CD8-positive, alpha-beta T cell (primary cell): ENCODE measurements at regions of chr17 and their contacts with region 1.

Region 1: DNA sequence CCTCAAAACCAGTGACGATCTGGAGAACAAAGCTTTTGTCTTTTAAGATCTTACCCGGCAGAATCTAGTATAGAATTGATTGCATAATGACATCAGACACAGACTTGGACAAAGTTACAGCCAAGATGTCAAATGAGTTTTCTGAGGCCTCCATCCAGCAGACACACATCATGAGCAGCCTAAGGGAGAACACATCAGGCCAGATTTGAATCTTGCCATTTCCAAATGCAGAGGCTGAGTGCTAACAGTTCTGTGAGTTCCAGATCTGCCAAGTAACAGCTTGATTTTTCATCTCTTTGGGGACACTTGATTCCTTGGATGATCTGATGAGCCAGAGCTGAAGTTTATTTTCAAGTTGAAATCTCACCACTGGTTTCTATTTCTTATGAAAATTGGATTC is 21.0 kb downstream of the NOG start:
- DNase-seq: no peak
- ATAC-seq: no peak
- H3K4me3 ChIP-seq: no peak overlapping the region
- H3K4me3 Mint-ChIP-seq: no peak overlapping the region
- H3K27ac ChIP-seq: no peak overlapping the region
- H3K27ac Mint-ChIP-seq: no peak overlapping the region
- H3K4me1 ChIP-seq: no peaks in the 10 kb centered on the region
- H3K4me1 Mint-ChIP-seq: peaks cover 10% of the 10 kb centered on the region
- H3K27me3 ChIP-seq: no peaks in the 10 kb centered on the region
- H3K27me3 Mint-ChIP-seq: peaks cover 2% of the 10 kb centered on the region
- CTCF ChIP-seq: no peak

Region 2: DNA sequence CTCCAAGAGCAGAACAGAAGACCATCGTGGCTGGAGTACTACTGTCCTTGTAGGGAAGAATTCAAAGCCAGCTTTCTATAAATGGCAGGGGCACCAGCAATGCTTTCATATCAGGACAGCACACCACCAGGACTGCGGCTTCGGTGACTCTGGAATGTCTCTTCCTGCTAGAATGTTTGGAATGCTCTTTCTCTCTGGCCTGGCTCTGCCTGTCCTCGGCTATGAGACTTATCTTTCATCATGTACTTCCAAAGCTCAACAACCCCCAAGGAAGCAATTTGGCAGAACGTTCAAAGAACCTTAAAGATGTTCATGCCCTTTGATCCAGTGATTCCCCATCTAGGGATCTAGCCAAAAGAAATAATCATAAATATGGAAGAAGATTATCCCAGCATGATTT is 73.7 kb before region 1 on chr17:
- CTCF ChIA-PET with region 1: no interaction called
- POLR2A ChIA-PET with region 1: no interaction called
- intact Hi-C with region 1: no loop called
- DNase-seq: no peak
- ATAC-seq: no peak
- H3K4me3 ChIP-seq: no peak overlapping the region
- H3K4me3 Mint-ChIP-seq: no peak overlapping the region
- H3K27ac ChIP-seq: no peak overlapping the region
- H3K27ac Mint-ChIP-seq: no peak overlapping the region
- H3K4me1 ChIP-seq: no peaks in the 10 kb centered on the region
- H3K4me1 Mint-ChIP-seq: no peaks in the 10 kb centered on the region
- H3K27me3 ChIP-seq: peaks cover 0 to 2% of the 10 kb centered on the region in 2 experiments
- H3K27me3 Mint-ChIP-seq: peaks cover 18% of the 10 kb centered on the region
- CTCF ChIP-seq: no peak

Region 3: GRCh38 chr17:56602292-56603130 is 12.0 kb before region 1 on chr17:
- CTCF ChIA-PET with region 1: interaction called, 10 read pairs
- POLR2A ChIA-PET with region 1: no interaction called
- intact Hi-C with region 1: no loop called
- DNase-seq: peak in 6 of 9 experiments; percentile 43 to 84 (median 64)
- ATAC-seq: peak; percentile 81
- H3K4me3 ChIP-seq: peak overlapping the region in 1 of 2 experiments; percentile 10
- H3K4me3 Mint-ChIP-seq: peak overlapping the region; percentile 26
- H3K27ac ChIP-seq: peak overlapping the region; percentile 57 to 70
- H3K27ac Mint-ChIP-seq: peak overlapping the region; percentile 99
- H3K4me1 ChIP-seq: peaks cover 75% of the 10 kb centered on the region
- H3K4me1 Mint-ChIP-seq: peaks cover 78% of the 10 kb centered on the region
- H3K27me3 ChIP-seq: peaks cover 0 to 8% of the 10 kb centered on the region in 2 experiments
- H3K27me3 Mint-ChIP-seq: peaks cover 6% of the 10 kb centered on the region
- CTCF ChIP-seq: no peak

Region 4: DNA sequence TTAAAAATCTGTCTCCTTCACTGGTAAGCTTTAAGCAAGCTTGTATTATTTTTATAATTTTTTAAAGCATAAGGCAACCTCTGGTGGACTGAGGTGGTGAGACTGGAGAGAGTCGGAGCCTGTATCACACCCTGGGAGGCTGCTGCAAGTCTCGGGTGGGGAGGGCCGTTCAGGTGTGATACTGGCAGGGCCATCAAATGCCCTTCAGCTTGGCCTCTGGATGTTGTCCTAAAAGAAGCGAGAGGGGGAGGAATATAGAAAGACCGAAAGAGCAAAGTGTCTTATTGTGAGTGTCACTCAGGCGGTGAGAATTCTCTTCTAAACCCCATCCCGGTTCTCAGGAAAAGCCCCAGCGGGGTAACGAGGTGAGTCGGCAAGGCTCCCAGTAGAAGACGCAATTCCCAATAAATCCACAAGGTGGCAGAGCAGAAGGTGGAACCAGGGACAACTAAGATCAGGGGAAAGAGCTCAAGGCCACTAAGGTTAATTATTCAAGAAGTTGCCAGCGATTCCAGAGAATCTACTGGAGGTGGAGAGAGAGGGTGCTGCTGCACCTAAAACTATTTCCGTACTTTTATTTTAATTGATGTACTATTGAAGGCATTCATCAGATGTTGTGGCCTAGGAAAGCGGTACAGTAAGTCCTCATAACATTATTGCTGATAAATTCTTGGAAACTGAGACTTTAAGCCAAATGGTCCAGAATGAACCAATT is 205.1 kb after region 1 on chr17:
- CTCF ChIA-PET with region 1: no interaction called
- POLR2A ChIA-PET with region 1: no interaction called
- intact Hi-C with region 1: no loop called
- DNase-seq: peak; percentile 37 to 83 (median 72)
- ATAC-seq: peak; percentile 94
- H3K4me3 ChIP-seq: no peak overlapping the region
- H3K4me3 Mint-ChIP-seq: no peak overlapping the region
- H3K27ac ChIP-seq: no peak overlapping the region
- H3K27ac Mint-ChIP-seq: no peak overlapping the region
- H3K4me1 ChIP-seq: no peaks in the 10 kb centered on the region
- H3K4me1 Mint-ChIP-seq: peaks cover 4% of the 10 kb centered on the region
- H3K27me3 ChIP-seq: no peaks in the 10 kb centered on the region
- H3K27me3 Mint-ChIP-seq: no peaks in the 10 kb centered on the region
- CTCF ChIP-seq: peak; percentile 82